Esophagus squamous epithelium (tissue), 5 donors: ENCODE measurements at regions of chr14 and their contacts with region 1.

Region 1: DNA sequence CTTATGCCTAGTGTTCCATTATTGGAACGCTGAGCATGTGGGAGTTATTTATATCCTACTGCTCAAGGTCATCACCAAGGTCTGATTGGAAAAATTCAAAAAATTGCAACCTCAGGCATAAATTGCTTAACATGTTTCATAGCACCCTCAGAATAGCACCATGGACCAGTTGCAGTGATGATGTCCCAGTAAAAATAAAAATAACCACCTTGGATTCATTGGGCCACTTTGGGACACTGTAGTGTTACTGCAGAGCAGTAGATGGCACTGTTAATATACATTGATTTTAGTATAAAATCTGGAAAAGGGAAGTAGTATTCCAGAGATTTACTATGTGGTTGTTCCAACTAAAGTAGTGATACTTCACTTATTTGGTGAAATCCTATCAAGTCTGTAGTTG is 31.0 kb upstream of the PTCSC3 start:
- DNase-seq: no peak
- H3K4me3 ChIP-seq: no peak overlapping the region
- H3K27ac ChIP-seq: no peak overlapping the region
- H3K4me1 ChIP-seq: no peaks in the 10 kb centered on the region
- H3K27me3 ChIP-seq: no peaks in the 10 kb centered on the region
- CTCF ChIP-seq: peak in 2 of 6 experiments; percentile 10 to 43
- POLR2A ChIP-seq: no peak

Region 2: DNA sequence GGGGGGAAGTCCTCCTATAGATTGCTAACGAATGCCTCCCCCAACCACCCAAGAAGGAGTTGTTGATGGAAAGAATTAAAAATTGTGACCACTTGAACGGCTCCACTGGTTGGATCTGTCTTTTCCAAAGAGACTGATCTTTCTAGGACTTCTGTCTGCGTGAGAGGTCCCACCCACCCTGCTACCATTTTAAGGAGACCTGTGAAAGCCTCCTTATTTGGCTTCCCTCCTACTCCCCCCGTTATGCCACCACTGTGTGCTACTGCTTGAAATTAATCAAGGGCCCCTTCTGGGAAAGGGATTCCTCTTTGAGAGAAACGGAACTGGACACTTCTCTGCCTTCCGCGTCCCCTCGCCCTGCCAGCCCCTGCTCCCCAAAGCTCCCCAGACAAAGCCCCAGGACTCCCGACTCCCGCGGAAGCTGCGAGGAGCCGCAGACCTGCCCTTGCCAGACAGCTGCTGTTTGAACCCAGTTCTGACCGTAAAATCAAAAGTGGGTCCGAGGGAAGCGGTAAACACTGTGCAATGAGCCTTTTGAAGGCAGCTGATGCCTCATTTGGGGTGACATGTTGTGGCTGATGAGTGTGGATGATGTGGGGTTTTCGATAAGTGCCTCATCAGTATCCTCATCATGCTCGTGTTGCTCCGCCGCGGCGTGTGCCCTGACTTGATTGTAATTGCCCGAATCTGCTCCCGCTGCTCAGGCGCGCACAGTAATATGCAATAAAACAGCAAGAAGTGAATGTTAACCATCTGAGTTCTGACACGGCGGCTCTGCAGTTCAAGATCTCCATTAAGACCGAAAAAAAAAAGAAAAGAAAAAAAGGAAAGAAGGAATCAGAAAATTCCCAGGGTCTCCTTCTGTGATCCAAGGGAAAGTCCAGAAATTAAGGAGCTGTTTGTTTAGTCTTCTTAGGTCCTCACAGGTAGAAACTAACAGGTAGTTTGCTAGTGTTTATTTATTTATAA is 64.7 kb after region 1 on chr14:
- intact Hi-C with region 1: no loop called
- DNase-seq: no peak
- H3K4me3 ChIP-seq: peak overlapping the region in 2 of 4 donors; percentile 25 to 59
- H3K27ac ChIP-seq: no peak overlapping the region
- H3K4me1 ChIP-seq: peaks cover 0 to 12% (median 7%) of the 10 kb centered on the region in 3 donors
- H3K27me3 ChIP-seq: peaks cover 0 to 53% (median 0%) of the 10 kb centered on the region in 4 donors
- CTCF ChIP-seq: no peak
- POLR2A ChIP-seq: no peak

Region 3: DNA sequence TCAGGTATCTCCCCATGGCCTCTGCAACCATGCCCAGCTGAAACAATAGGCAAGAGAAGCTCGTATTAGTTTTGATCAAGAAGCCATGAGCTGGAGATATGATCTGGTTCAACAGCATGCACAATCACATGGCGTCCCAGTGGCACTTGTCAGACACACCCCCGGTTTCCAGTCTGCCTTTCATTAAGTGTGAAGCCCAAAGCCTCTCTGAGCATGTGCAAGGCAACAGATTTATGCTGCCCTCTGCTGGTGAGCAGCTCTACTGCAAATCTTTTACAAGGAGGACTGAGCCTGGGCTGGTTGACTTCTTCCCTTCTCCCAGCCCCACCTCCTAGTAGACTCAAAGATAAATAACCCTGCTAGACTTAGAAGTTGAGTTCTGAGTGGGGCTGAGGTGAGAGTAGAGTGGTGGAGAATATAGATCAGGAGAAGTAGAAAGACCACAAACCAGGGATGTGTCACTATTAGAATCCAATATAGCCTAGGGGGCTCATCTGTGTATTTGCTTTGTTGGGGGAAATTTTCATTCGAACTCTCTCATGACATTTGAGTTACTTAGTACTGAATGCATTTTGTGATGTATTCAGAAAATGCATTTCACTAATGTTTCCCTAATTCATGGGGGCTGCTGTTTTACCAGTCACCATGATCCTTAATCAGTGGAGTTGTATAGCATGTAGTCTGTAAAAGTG is 166.6 kb after region 1 on chr14:
- intact Hi-C with region 1: loop called (anchors 10 kb)
- DNase-seq: peak; percentile 5
- H3K4me3 ChIP-seq: no peak overlapping the region
- H3K27ac ChIP-seq: no peak overlapping the region
- H3K4me1 ChIP-seq: no peaks in the 10 kb centered on the region
- H3K27me3 ChIP-seq: peaks cover 0 to 6% (median 0%) of the 10 kb centered on the region in 4 donors
- CTCF ChIP-seq: peak; percentile 70 to 87 (median 79)
- POLR2A ChIP-seq: no peak

Region 4: DNA sequence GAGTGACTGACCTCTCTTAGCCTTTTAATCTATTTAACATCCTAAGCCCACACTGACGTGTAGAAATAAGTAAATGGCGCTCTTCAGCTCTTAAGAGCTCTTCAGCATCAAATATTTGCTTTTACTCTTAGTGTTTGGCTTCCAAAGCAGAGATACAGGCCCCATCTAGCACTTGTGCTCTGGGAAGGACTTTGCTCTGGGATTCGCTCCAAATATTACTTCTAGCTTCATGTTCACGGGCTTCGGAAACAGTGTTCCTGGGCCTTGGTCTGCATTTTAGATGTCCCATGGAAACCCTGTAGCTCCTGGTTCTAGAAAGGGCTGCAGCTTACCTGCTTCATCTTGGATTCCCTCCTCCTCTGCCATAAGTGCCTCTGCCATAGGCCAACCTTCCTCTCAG is 377.6 kb after region 1 on chr14:
- intact Hi-C with region 1: no loop called
- DNase-seq: no peak
- H3K4me3 ChIP-seq: no peak overlapping the region
- H3K27ac ChIP-seq: no peak overlapping the region
- H3K4me1 ChIP-seq: peaks cover 6 to 31% (median 16%) of the 10 kb centered on the region in 3 donors
- H3K27me3 ChIP-seq: peaks cover 0 to 89% (median 2%) of the 10 kb centered on the region in 4 donors
- CTCF ChIP-seq: no peak
- POLR2A ChIP-seq: no peak